HCT116 (cell line): ENCODE measurements at regions of chr3 and their contacts with region 1.

Region 1: DNA sequence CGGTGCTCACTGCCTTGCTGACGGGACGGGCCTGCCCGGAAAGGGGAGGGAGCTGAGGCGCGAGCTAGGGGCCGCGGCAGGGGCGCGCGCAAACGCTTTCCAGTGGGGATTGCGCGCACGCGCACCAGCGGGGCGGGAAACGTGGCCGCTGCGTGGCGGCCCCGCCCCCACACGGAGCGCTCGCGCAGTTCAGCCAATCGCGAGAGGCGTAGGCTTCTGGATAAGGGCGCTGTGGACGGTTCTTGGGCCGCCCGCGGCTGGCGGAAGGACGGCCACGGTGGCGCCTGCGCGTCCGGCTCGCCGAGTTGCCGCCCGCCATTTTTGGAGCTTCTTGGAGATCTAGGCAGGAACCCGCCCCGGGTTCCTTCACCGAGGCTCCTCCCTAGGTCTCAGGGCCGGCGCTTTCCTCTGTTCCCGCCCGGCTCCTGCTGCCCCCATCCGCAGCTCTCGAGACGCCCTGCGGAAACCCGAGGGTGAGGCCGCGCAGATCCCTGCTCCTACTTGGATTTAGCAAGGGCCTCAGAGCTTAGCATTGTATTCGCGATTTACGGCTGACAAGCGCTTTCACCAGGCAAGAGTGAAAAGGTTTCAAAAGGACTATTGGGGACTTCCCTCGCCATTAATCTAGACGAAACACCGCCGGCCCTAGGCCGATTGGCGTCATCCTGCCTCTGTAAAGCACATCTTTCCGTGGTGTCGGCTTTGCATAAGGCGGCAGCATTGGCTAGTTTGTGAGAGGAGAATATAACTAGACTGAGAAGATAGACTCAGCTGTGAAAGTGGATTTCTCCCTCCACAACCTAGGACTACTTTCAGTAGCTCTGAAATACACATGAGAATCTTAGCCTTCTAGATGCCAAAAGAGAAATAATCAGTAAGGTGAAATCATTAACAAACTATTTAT is 496 bp upstream of the STAG1 start:
- DNase-seq: peak; percentile 96
- ATAC-seq: peak; percentile 88
- H3K4me3 ChIP-seq: peak overlapping the region; percentile 74 to 76
- H3K27ac ChIP-seq: peak overlapping the region; percentile 99
- H3K4me1 ChIP-seq: peaks cover 22 to 38% of the 10 kb centered on the region in 2 experiments
- H3K27me3 ChIP-seq: no peaks in the 10 kb centered on the region
- CTCF ChIP-seq: peak; percentile 25 to 82 (median 80); a peak in 3 of 6 replicates
- POLR2A ChIP-seq: peak; percentile 71
- RAD21 ChIP-seq: peak; percentile 59

Region 2: DNA sequence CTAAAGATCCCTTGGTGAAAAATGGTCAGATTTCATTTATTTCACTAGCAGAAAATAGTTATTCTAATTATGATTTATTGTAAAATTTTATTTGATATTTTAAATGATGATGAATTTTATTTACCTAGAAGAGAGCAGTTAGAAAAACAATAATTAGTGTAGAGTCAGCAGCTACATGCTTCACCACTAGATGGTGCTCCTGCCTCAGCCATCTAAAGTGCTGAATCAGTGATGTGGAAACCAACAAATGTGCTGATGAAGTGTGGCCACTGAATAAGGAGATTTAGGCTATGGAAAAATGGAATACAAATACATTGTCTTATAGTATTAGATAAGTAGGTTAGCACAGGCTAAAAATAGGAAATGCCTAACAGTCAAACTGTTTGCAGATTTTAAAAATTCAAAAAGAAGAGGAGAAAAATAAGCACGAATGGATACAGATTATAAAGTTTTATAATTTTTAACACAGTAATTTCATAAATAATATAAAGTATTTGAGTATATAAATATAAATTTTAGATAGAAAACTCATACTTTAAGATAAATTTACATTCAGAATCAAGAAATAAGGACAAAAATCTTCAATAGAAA is 677.4 kb before region 1 on chr3:
- CTCF ChIA-PET with region 1: interaction called, 40 read pairs
- POLR2A ChIA-PET with region 1: no interaction called
- RAD21 ChIA-PET with region 1: interaction called, 5 to 6 read pairs
- intact Hi-C with region 1: loop called (anchors 1 kb)
- DNase-seq: peak; percentile 51
- ATAC-seq: peak; percentile 64; the same call in 1 of the 2 replicates
- H3K4me3 ChIP-seq: no peak overlapping the region
- H3K27ac ChIP-seq: no peak overlapping the region
- H3K4me1 ChIP-seq: peaks cover 7 to 13% of the 10 kb centered on the region in 2 experiments
- H3K27me3 ChIP-seq: no peaks in the 10 kb centered on the region
- CTCF ChIP-seq: peak; percentile 83 to 91 (median 87); a peak in 5 of 6 replicates
- POLR2A ChIP-seq: no peak
- RAD21 ChIP-seq: peak; percentile 97

Region 3: DNA sequence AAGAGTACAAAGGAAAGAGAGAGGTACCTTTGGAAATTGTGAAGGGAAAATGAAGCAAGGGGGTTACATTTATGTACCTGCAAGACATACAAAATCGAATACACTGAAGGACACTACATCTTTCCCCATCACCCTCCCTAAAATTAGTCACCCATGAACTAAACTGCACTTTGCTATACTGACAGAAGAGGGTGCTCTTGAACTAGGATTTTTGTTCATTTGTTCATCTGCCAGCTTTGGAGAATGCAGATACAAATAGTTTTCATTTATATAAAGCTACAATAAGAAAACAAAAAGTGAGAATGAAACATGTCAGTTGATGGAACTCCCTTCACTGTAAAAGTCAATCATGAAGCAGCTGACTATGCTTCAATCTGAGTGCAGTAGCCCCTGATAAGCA is 446.8 kb before region 1 on chr3:
- CTCF ChIA-PET with region 1: interaction called, 38 read pairs
- POLR2A ChIA-PET with region 1: interaction called, 11 read pairs
- RAD21 ChIA-PET with region 1: interaction called, 3 to 7 read pairs
- intact Hi-C with region 1: loop called (anchors 1 kb)
- DNase-seq: peak; percentile 32
- ATAC-seq: peak; percentile 74
- H3K4me3 ChIP-seq: no peak overlapping the region
- H3K27ac ChIP-seq: no peak overlapping the region
- H3K4me1 ChIP-seq: no peaks in the 10 kb centered on the region
- H3K27me3 ChIP-seq: no peaks in the 10 kb centered on the region
- CTCF ChIP-seq: peak; percentile 62 to 76 (median 75); a peak in 5 of 6 replicates
- POLR2A ChIP-seq: no peak
- RAD21 ChIP-seq: peak; percentile 79

Region 4: GRCh38 chr3:136390574-136390973 is 362.1 kb before region 1 on chr3:
- CTCF ChIA-PET with region 1: interaction called, 55 read pairs
- POLR2A ChIA-PET with region 1: interaction called, 6 read pairs
- RAD21 ChIA-PET with region 1: interaction called, 6 to 13 read pairs
- intact Hi-C with region 1: loop called (anchors 1 kb)
- DNase-seq: no peak
- ATAC-seq: no peak
- H3K4me3 ChIP-seq: no peak overlapping the region
- H3K27ac ChIP-seq: no peak overlapping the region
- H3K4me1 ChIP-seq: peaks cover 0 to 2% of the 10 kb centered on the region in 2 experiments; a peak in 1 of 4 replicates
- H3K27me3 ChIP-seq: no peaks in the 10 kb centered on the region
- CTCF ChIP-seq: no peak
- POLR2A ChIP-seq: no peak
- RAD21 ChIP-seq: no peak

Region 5: DNA sequence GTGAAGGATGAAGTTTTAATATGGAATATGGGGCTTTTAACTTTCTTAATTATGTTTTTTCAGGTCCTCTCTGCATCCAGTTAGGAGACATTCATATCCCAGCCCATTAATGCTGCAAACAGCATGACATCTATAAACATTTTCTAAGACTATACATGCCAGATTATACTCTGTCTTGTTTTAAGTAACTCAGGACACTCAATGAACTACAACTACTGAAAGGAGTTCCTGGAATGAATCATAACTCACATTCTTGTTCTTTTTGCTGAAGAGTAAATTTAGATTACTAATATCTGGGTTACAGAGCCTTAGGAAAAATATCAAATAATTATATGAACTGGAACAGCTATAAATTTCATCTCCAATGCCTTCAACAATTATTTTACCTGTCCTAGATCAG is 167.9 kb before region 1 on chr3:
- CTCF ChIA-PET with region 1: no interaction called
- POLR2A ChIA-PET with region 1: no interaction called
- RAD21 ChIA-PET with region 1: no interaction called
- intact Hi-C with region 1: no loop called
- DNase-seq: no peak
- ATAC-seq: no peak
- H3K4me3 ChIP-seq: no peak overlapping the region
- H3K27ac ChIP-seq: no peak overlapping the region
- H3K4me1 ChIP-seq: no peaks in the 10 kb centered on the region
- H3K27me3 ChIP-seq: no peaks in the 10 kb centered on the region
- CTCF ChIP-seq: no peak
- POLR2A ChIP-seq: no peak
- RAD21 ChIP-seq: no peak

Region 6: GRCh38 chr3:136741063-136741462 is 11.6 kb before region 1 on chr3:
- CTCF ChIA-PET with region 1: interaction called, 16 read pairs
- POLR2A ChIA-PET with region 1: interaction called, 8 read pairs
- RAD21 ChIA-PET with region 1: no interaction called
- intact Hi-C with region 1: no loop called
- DNase-seq: no peak
- ATAC-seq: 0 out of 2 replicates have a peak, but pooled peaks have one; percentile 35
- H3K4me3 ChIP-seq: no peak overlapping the region
- H3K27ac ChIP-seq: no peak overlapping the region
- H3K4me1 ChIP-seq: peaks cover 22 to 38% of the 10 kb centered on the region in 2 experiments
- H3K27me3 ChIP-seq: no peaks in the 10 kb centered on the region
- CTCF ChIP-seq: no peak
- POLR2A ChIP-seq: no peak
- RAD21 ChIP-seq: no peak

Region 7: DNA sequence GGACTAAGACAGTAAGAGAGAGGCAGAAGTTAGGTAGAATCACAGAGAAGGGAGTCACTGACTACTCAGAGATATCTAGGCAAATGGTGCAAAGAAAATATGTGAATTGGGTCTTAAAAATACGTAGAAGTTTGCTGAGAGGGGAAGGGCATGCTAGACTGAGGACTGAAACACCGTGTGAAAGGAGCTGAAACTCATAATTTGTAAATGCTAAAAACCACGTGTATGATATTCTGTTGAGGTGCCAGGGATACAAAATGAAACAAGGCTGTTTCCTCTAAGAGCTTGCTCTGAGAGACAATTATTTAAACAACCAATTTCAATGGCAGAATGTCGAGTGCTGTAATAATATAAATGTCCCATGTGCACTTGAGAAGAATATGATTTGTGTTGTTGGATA is 156.5 kb after region 1 on chr3:
- CTCF ChIA-PET with region 1: no interaction called
- POLR2A ChIA-PET with region 1: no interaction called
- RAD21 ChIA-PET with region 1: no interaction called
- intact Hi-C with region 1: no loop called
- DNase-seq: no peak
- ATAC-seq: no peak
- H3K4me3 ChIP-seq: no peak overlapping the region
- H3K27ac ChIP-seq: no peak overlapping the region
- H3K4me1 ChIP-seq: no peaks in the 10 kb centered on the region
- H3K27me3 ChIP-seq: no peaks in the 10 kb centered on the region
- CTCF ChIP-seq: no peak
- POLR2A ChIP-seq: no peak
- RAD21 ChIP-seq: no peak

Region 8: GRCh38 chr3:137013955-137014688 is 261.4 kb after region 1 on chr3:
- CTCF ChIA-PET with region 1: interaction called, 73 read pairs
- POLR2A ChIA-PET with region 1: interaction called, 13 read pairs
- RAD21 ChIA-PET with region 1: interaction called, 7 to 11 read pairs
- intact Hi-C with region 1: loop called (anchors 2 kb)
- DNase-seq: peak; percentile 63
- ATAC-seq: peak; percentile 93
- H3K4me3 ChIP-seq: no peak overlapping the region
- H3K27ac ChIP-seq: no peak overlapping the region
- H3K4me1 ChIP-seq: peaks cover 0 to 6% of the 10 kb centered on the region in 2 experiments; a peak in 1 of 4 replicates
- H3K27me3 ChIP-seq: no peaks in the 10 kb centered on the region
- CTCF ChIP-seq: peak; percentile 72 to 90 (median 87)
- POLR2A ChIP-seq: no peak
- RAD21 ChIP-seq: peak; percentile 99